ENCODE measurements at regions of chr1 and their contacts with region 1.

Region 1: GRCh38 chr1:228515200-228515834 is 28.1 kb downstream of the RNF187 start:
- DNase-seq: peak in 23 of 35 experiments; percentile 5 to 72 (median 22)
- ATAC-seq: peak in 3 of 4 experiments; percentile 55 to 70 (median 56)
- H3K4me3 ChIP-seq: no peak overlapping the region
- H3K4me3 Mint-ChIP-seq: no peak overlapping the region
- H3K27ac ChIP-seq: no peak overlapping the region
- H3K27ac Mint-ChIP-seq: no peak overlapping the region
- H3K4me1 ChIP-seq: peaks cover 0 to 13% of the 10 kb centered on the region in 2 experiments
- H3K4me1 Mint-ChIP-seq: peaks cover 7 to 11% (median 7%) of the 10 kb centered on the region in 3 donors
- H3K27me3 ChIP-seq: peaks cover 2 to 5% of the 10 kb centered on the region in 2 experiments
- H3K27me3 Mint-ChIP-seq: peaks cover 27 to 48% of the 10 kb centered on the region in 2 donors

Region 2: GRCh38 chr1:228259951-228260350 is 255.4 kb before region 1 on chr1:
- CTCF ChIA-PET with region 1: no interaction called
- POLR2A ChIA-PET with region 1: no interaction called
- DNase-seq: no peak
- ATAC-seq: no peak
- H3K4me3 ChIP-seq: no peak overlapping the region
- H3K4me3 Mint-ChIP-seq: no peak overlapping the region
- H3K27ac ChIP-seq: no peak overlapping the region
- H3K27ac Mint-ChIP-seq: no peak overlapping the region
- H3K4me1 ChIP-seq: no peaks in the 10 kb centered on the region
- H3K4me1 Mint-ChIP-seq: no peaks in the 10 kb centered on the region
- H3K27me3 ChIP-seq: no peaks in the 10 kb centered on the region
- H3K27me3 Mint-ChIP-seq: no peaks in the 10 kb centered on the region

Region 3: GRCh38 chr1:228415667-228416216 is 99.6 kb before region 1 on chr1:
- CTCF ChIA-PET with region 1: no interaction called
- POLR2A ChIA-PET with region 1: interaction called in 1 of 2 experiments, 13 read pairs
- DNase-seq: no peak
- ATAC-seq: peak; percentile 8 to 48 (median 26)
- H3K4me3 ChIP-seq: peak overlapping the region; percentile 49 to 54
- H3K4me3 Mint-ChIP-seq: peak overlapping the region; percentile 70 to 81 (median 75)
- H3K27ac ChIP-seq: no peak overlapping the region
- H3K27ac Mint-ChIP-seq: no peak overlapping the region
- H3K4me1 ChIP-seq: peaks cover 5 to 19% of the 10 kb centered on the region in 2 experiments
- H3K4me1 Mint-ChIP-seq: peaks cover 20 to 24% (median 24%) of the 10 kb centered on the region in 3 donors
- H3K27me3 ChIP-seq: peaks cover 6 to 24% of the 10 kb centered on the region in 2 experiments
- H3K27me3 Mint-ChIP-seq: peaks cover 5 to 12% of the 10 kb centered on the region in 2 donors

Region 4: GRCh38 chr1:228555074-228555989 is 40.0 kb after region 1 on chr1:
- CTCF ChIA-PET with region 1: no interaction called
- POLR2A ChIA-PET with region 1: no interaction called
- DNase-seq: peak in 19 of 35 experiments; percentile 3 to 56 (median 21)
- ATAC-seq: no peak
- H3K4me3 ChIP-seq: no peak overlapping the region
- H3K4me3 Mint-ChIP-seq: no peak overlapping the region
- H3K27ac ChIP-seq: no peak overlapping the region
- H3K27ac Mint-ChIP-seq: no peak overlapping the region
- H3K4me1 ChIP-seq: no peaks in the 10 kb centered on the region
- H3K4me1 Mint-ChIP-seq: no peaks in the 10 kb centered on the region
- H3K27me3 ChIP-seq: peaks cover 0 to 2% of the 10 kb centered on the region in 2 experiments
- H3K27me3 Mint-ChIP-seq: peaks cover 1 to 6% of the 10 kb centered on the region in 2 donors

Measured in T-cell (primary cell).